ENCODE measurements at regions of chr4 and their contacts with region 1.

Region 1: GRCh38 chr4:38266616-38267015 is 306.4 kb downstream of the PTTG2 start:
- DNase-seq: peak; percentile 55
- ATAC-seq: peak; percentile 91
- H3K4me3 Mint-ChIP-seq: no peak overlapping the region
- H3K27ac Mint-ChIP-seq: no peak overlapping the region
- H3K4me1 Mint-ChIP-seq: no peaks in the 10 kb centered on the region
- H3K27me3 Mint-ChIP-seq: no peaks in the 10 kb centered on the region

Region 2: DNA sequence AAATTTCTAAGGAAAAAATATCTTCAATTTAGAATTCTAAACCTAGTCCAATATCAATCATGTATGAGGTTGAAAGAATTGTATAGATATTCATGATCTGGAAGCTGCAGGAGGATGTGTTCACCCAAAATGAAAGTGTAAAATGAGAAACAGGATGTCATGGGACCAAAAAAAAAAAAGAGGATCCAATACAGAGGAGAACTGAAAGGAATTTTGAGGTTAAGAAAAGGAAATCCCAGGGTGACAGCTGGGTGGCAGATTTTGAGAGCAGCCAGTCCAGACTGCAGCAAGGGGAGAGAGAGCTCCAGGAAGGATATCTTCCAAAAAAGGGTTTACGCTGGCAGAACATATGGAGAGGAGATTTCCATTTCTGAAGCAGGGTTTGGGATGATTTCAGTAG is 477.2 kb after region 1 on chr4:
- CTCF ChIA-PET with region 1: no interaction called
- POLR2A ChIA-PET with region 1: interaction called, 12 read pairs
- intact Hi-C with region 1: no loop called
- DNase-seq: no peak
- ATAC-seq: no peak
- H3K4me3 Mint-ChIP-seq: no peak overlapping the region
- H3K27ac Mint-ChIP-seq: no peak overlapping the region
- H3K4me1 Mint-ChIP-seq: peaks cover 5% of the 10 kb centered on the region
- H3K27me3 Mint-ChIP-seq: no peaks in the 10 kb centered on the region

Measured in activated CD4-positive, alpha-beta T cell treated with anti-CD3 and anti-CD28 coated beads for 36 hours (primary cell).